ENCODE measurements at regions of chr4 and their contacts with region 1.

Region 1: GRCh38 chr4:15479089-15479912 is 9.6 kb downstream of the CC2D2A start:
- DNase-seq: peak; percentile 15 to 75 (median 37)
- ATAC-seq: peak; percentile 85
- H3K4me3 ChIP-seq: peak overlapping the region; percentile 28
- H3K27ac ChIP-seq: no peak overlapping the region; the same call in 2 of the 3 replicates
- H3K4me1 ChIP-seq: peaks cover 0 to 9% of the 10 kb centered on the region in 2 experiments; a peak in 3 of 5 replicates
- H3K27me3 ChIP-seq: no peaks in the 10 kb centered on the region
- CTCF ChIP-seq: peak; percentile 49 to 87 (median 74); a peak in 5 of 6 replicates
- EP300 ChIP-seq: no peak
- POLR2A ChIP-seq: no peak
- RAD21 ChIP-seq: peak; percentile 89 to 91

Region 2: GRCh38 chr4:15506464-15506863 is 27.2 kb after region 1 on chr4:
- CTCF ChIA-PET with region 1: no interaction called
- POLR2A ChIA-PET with region 1: no interaction called
- in situ Hi-C with region 1: no loop called
- intact Hi-C with region 1: no loop called
- DNase-seq: no peak
- ATAC-seq: no peak
- H3K4me3 ChIP-seq: no peak overlapping the region
- H3K27ac ChIP-seq: no peak overlapping the region
- H3K4me1 ChIP-seq: no peaks in the 10 kb centered on the region
- H3K27me3 ChIP-seq: no peaks in the 10 kb centered on the region
- CTCF ChIP-seq: no peak
- EP300 ChIP-seq: no peak
- POLR2A ChIP-seq: no peak
- RAD21 ChIP-seq: no peak

Region 3: GRCh38 chr4:15525054-15525453 is 45.8 kb after region 1 on chr4:
- CTCF ChIA-PET with region 1: no interaction called
- POLR2A ChIA-PET with region 1: no interaction called
- in situ Hi-C with region 1: no loop called
- intact Hi-C with region 1: loop called (anchors 5 kb)
- DNase-seq: no peak
- ATAC-seq: no peak
- H3K4me3 ChIP-seq: no peak overlapping the region
- H3K27ac ChIP-seq: no peak overlapping the region
- H3K4me1 ChIP-seq: peaks cover 0 to 25% of the 10 kb centered on the region in 2 experiments; a peak in 3 of 5 replicates
- H3K27me3 ChIP-seq: no peaks in the 10 kb centered on the region
- CTCF ChIP-seq: no peak
- EP300 ChIP-seq: no peak
- POLR2A ChIP-seq: no peak
- RAD21 ChIP-seq: no peak

Region 4: DNA sequence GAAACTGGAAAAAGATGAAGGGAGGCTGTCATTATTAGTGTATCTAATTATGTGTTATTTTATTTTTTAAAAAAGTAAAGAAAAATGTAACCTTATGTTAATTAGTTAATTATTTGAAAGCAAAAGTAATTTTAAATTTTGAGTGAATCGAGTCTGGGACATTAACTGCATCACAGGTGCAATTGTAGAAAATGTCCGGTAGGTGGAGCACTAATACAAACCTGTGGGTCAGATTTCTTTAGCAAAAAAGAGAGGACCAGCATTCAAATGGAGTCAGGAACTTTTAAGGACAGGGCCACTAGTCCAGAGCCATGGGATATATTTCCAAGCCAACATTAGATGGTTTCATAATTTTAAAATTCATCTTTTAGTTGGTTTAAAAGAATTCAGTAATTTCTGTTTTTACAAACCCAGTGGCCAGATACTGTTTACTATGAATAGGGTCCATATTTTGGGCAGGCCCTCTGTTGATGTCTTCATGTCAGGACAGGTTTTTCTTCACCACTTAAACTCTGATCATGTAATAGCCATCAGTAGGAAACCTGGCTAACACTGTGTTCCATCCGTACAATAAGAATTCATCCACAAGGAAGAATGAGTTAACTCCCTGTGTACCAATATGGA is 250.7 kb after region 1 on chr4:
- CTCF ChIA-PET with region 1: no interaction called
- POLR2A ChIA-PET with region 1: no interaction called
- in situ Hi-C with region 1: no loop called
- intact Hi-C with region 1: loop called (anchors 1 kb)
- DNase-seq: peak; percentile 52 to 59 (median 56)
- ATAC-seq: peak; percentile 82
- H3K4me3 ChIP-seq: no peak overlapping the region
- H3K27ac ChIP-seq: no peak overlapping the region
- H3K4me1 ChIP-seq: no peaks in the 10 kb centered on the region
- H3K27me3 ChIP-seq: peaks cover 9 to 11% of the 10 kb centered on the region in 2 experiments; a peak in 4 of 5 replicates
- CTCF ChIP-seq: peak; percentile 53 to 80 (median 65)
- EP300 ChIP-seq: no peak
- POLR2A ChIP-seq: no peak
- RAD21 ChIP-seq: peak; percentile 51 to 65

Region 5: GRCh38 chr4:15956179-15956850 is 477.0 kb after region 1 on chr4:
- CTCF ChIA-PET with region 1: interaction called, 4 read pairs
- POLR2A ChIA-PET with region 1: no interaction called
- in situ Hi-C with region 1: no loop called
- intact Hi-C with region 1: loop called (anchors 1 kb)
- DNase-seq: peak; percentile 73 to 77 (median 74)
- ATAC-seq: peak; percentile 97
- H3K4me3 ChIP-seq: no peak overlapping the region
- H3K27ac ChIP-seq: no peak overlapping the region
- H3K4me1 ChIP-seq: no peaks in the 10 kb centered on the region
- H3K27me3 ChIP-seq: no peaks in the 10 kb centered on the region; a peak in 1 of 5 replicates
- CTCF ChIP-seq: peak; percentile 80 to 90 (median 87)
- EP300 ChIP-seq: no peak
- POLR2A ChIP-seq: no peak
- RAD21 ChIP-seq: peak; percentile 77 to 84

Region 6: GRCh38 chr4:16225863-16226815 is 746.8 kb after region 1 on chr4 and contains the start of gene TAPT1:
- CTCF ChIA-PET with region 1: no interaction called
- POLR2A ChIA-PET with region 1: no interaction called
- in situ Hi-C with region 1: loop called (anchors 25 kb)
- intact Hi-C with region 1: no loop called
- DNase-seq: peak; percentile 80 to 84 (median 82)
- ATAC-seq: peak; percentile 57
- H3K4me3 ChIP-seq: peak within 1 kb of the TSS; percentile 81
- H3K27ac ChIP-seq: peak within 1 kb of the TSS; percentile 91
- H3K4me1 ChIP-seq: peaks cover 6 to 12% of the 10 kb centered on the region in 2 experiments; a peak in 4 of 5 replicates
- H3K27me3 ChIP-seq: no peaks in the 10 kb centered on the region
- CTCF ChIP-seq: no peak
- EP300 ChIP-seq: no peak
- POLR2A ChIP-seq: no peak
- RAD21 ChIP-seq: no peak
- polyA plus RNA-seq, gene TAPT1: 1.6 to 2.7 TPM

Region 7: GRCh38 chr4:16443504-16444088 is 964.3 kb after region 1 on chr4:
- CTCF ChIA-PET with region 1: no interaction called
- POLR2A ChIA-PET with region 1: no interaction called
- in situ Hi-C with region 1: no loop called
- intact Hi-C with region 1: loop called (anchors 5 kb)
- DNase-seq: peak; percentile 33 to 54 (median 37)
- ATAC-seq: peak; percentile 83
- H3K4me3 ChIP-seq: no peak overlapping the region
- H3K27ac ChIP-seq: no peak overlapping the region
- H3K4me1 ChIP-seq: no peaks in the 10 kb centered on the region
- H3K27me3 ChIP-seq: no peaks in the 10 kb centered on the region
- CTCF ChIP-seq: peak; percentile 35 to 65 (median 62); a peak in 5 of 6 replicates
- EP300 ChIP-seq: no peak
- POLR2A ChIP-seq: no peak
- RAD21 ChIP-seq: peak in 1 of 2 experiments; percentile 51; a peak in 3 of 4 replicates

Region 8: DNA sequence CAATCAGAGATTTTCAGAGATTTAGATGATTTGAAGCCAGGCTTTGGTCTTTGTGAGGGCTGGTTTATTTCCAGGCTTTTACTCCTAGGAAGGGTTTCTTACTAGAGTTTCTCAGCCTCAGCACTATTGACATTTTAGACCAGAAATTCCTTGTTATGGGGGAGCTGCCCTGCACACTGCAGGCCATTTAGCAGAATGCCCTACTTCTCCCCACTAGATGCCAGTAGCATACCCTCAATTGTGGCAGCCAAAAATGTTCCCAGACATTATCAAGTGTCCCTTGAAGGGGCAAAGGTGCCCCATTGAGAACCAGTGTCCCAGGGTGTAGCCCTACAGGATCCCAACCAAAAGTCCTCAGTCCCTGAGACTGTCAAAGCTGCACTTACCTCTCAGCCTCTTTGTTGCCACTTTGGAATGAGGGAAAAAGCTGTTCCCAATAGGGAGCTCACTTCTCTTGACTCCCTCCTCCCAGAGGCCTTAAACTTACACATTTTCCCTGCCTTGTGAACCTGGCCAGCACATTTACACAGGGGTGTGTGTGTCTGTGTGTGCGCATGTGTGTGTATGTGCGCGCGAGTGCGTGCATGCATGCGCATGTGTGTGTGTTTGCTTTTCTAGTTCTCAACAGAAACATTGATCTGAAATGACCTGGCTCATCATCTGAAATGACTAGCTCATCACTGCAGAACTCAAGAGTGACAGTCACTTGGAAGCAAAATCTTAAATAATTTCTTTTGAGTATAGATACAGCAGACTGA is 1801.1 kb after region 1 on chr4:
- CTCF ChIA-PET with region 1: no interaction called
- POLR2A ChIA-PET with region 1: no interaction called
- in situ Hi-C with region 1: no loop called
- intact Hi-C with region 1: no loop called
- DNase-seq: no peak
- ATAC-seq: no peak
- H3K4me3 ChIP-seq: no peak overlapping the region
- H3K27ac ChIP-seq: no peak overlapping the region
- H3K4me1 ChIP-seq: no peaks in the 10 kb centered on the region
- H3K27me3 ChIP-seq: no peaks in the 10 kb centered on the region; a peak in 1 of 5 replicates
- CTCF ChIP-seq: no peak
- EP300 ChIP-seq: no peak
- POLR2A ChIP-seq: no peak
- RAD21 ChIP-seq: no peak

Measured in K562 (cell line).